Mucosa of descending colon (tissue), 3 donors: ENCODE measurements at regions of chr12 and their contacts with region 1.

Region 1: DNA sequence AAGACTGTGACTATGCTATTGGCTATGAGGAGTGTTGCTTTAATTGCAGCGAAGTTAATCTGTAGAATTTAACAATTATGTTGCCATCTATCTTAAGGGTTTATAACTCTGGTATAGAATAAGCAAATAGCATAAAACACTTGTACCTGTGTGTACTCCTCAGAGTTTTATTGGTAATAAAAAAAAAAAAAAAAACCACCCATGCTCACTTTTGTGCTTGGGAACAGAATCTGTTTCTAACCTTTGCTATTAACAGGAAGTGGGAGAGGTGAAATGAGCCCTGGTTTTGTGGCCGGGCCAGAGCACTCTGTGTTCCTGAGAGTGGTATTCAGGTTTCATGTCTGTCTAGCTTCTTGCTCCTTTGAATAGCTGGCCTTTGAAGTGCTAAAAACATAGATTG is 53.1 kb downstream of the PDE3A start:
- DNase-seq: peak; percentile 65 to 72 (median 66)
- ATAC-seq: peak; percentile 76
- H3K4me3 ChIP-seq: no peak overlapping the region
- H3K4me1 ChIP-seq: peaks cover 45% of the 10 kb centered on the region
- CTCF ChIP-seq: no peak

Region 2: GRCh38 chr12:20369305-20370005 is 52.0 kb before region 1 on chr12:
- intact Hi-C with region 1: loop called in 1 of 2 experiments (anchors 5 kb)
- DNase-seq: peak; percentile 77 to 88 (median 86)
- ATAC-seq: peak; percentile 76
- H3K4me3 ChIP-seq: peak overlapping the region; percentile 43
- H3K4me1 ChIP-seq: no peaks in the 10 kb centered on the region
- CTCF ChIP-seq: no peak

Region 3: DNA sequence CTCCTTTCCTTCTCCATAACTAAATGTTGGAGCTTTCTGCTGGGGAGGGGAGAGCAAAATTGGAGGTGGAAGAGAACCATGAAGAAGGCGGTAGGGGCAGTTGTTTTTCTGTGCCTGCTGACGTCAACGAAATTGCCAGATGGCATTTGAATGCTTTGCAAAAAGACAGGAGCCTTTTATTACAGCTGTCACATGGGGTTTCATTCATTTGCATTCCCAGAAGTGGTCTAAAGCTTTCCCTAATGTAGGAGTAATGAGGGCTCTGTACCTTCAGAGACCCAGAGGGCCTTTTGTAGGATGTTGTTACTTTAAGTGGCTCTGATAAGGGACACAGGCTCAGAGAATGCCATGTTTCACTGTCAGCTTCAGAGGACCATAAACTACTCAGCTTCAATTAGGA is 166.6 kb after region 1 on chr12:
- intact Hi-C with region 1: no loop called
- DNase-seq: no peak
- ATAC-seq: no peak
- H3K4me3 ChIP-seq: no peak overlapping the region
- H3K4me1 ChIP-seq: no peaks in the 10 kb centered on the region
- CTCF ChIP-seq: no peak